Naive thymus-derived CD8-positive, alpha-beta T cell (primary cell): ENCODE measurements at regions of chr2 and their contacts with region 1.

Region 1: GRCh38 chr2:106160786-106161261 is 33.3 kb downstream of the UXS1 start:
- DNase-seq: peak in 9 of 10 donors; percentile 18 to 76 (median 60)
- ATAC-seq: peak; percentile 66 to 72
- H3K4me3 Mint-ChIP-seq: peak overlapping the region; percentile 89 to 99 (median 96)
- H3K27ac Mint-ChIP-seq: peak overlapping the region; percentile 93 to 100 (median 98)
- H3K4me1 Mint-ChIP-seq: peaks cover 46 to 97% (median 89%) of the 10 kb centered on the region in 4 donors
- H3K27me3 Mint-ChIP-seq: peaks cover 0 to 2% (median 0%) of the 10 kb centered on the region in 5 donors

Region 2: DNA sequence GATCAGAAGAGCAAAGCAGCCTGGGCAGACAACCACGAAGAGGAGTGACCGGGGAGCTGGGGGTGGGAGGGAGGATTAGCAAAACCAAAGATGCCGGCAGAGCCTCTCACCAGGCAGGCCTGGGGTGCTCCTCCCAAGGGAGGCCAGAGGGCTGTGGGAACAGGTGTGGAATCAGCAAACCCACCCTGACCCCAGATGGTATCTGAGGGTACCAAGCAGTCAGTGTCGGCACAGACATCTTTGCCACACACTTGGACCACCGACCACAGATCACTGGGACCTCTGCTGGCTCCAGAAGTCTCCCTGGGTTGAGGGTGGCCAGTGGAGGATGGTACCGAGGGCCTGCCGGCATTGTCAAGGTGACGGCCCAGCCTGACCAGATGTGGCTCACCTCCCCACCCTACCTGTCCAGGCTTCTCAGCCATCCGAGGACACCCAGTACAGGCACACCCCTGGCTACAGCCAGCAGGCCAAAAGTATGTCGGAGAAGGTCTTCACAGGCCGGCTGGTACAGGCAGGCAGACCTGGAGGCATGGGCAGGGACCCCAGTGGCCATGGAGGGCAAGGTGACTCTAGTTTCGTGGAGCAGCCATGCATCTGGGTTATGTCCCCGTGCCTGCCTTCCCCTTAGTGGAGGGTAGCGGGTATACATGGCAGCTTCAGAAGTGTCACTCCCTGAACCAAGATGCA is 48.8 kb before region 1 on chr2:
- POLR2A ChIA-PET with region 1: no interaction called
- DNase-seq: no peak
- ATAC-seq: no peak
- H3K4me3 Mint-ChIP-seq: no peak overlapping the region
- H3K27ac Mint-ChIP-seq: peak overlapping the region in 5 of 10 donors; percentile 6 to 77 (median 38)
- H3K4me1 Mint-ChIP-seq: peaks cover 3 to 25% (median 14%) of the 10 kb centered on the region in 4 donors
- H3K27me3 Mint-ChIP-seq: no peaks in the 10 kb centered on the region

Region 3: DNA sequence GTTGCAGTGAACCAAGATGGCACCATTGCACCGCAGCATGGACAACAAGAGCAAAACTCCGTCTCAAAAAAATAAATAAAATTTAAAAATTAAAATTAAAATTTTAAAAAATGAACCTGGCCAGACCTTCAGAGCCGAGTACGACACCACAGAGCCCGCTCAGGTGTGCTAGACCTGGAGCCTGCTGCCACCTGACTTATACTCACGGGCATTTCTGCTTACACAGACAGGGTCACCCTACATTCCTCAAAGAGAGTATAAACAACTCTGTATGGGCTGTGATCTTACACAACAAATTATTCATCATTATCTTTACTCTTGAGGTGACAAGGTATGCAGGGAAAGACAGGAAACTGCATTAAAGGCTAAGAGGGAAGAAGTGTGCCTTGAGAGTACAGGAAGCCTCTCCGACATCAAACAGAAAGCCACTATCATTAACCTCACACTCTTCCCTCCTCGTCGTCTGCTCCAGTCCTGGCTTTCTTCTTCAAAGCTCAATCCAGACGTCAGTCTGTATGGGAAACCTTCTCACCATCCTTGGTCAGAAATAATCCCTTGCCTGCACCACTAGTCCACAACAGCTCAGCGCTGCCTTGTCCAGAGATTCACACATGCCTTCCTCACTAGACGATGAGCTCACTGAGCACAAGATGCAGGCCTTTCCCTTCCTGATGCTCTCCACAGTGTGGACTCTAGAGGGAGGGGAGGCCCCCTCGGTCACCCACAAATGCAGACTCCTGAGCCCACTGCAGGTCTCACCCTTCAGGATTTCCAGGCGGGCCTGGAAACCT is 22.9 kb before region 1 on chr2:
- POLR2A ChIA-PET with region 1: interaction called, 22 read pairs
- DNase-seq: peak in 5 of 10 donors; percentile 11 to 48 (median 27)
- ATAC-seq: peak; percentile 77 to 83
- H3K4me3 Mint-ChIP-seq: peak overlapping the region; percentile 69 to 98 (median 82)
- H3K27ac Mint-ChIP-seq: peak overlapping the region; percentile 79 to 97 (median 92)
- H3K4me1 Mint-ChIP-seq: peaks cover 33 to 47% (median 47%) of the 10 kb centered on the region in 4 donors
- H3K27me3 Mint-ChIP-seq: no peaks in the 10 kb centered on the region

Region 4: GRCh38 chr2:106175086-106175850 is 14.4 kb after region 1 on chr2:
- POLR2A ChIA-PET with region 1: interaction called, 13 read pairs
- DNase-seq: no peak
- ATAC-seq: no peak
- H3K4me3 Mint-ChIP-seq: peak overlapping the region in 5 of 10 donors; percentile 42 to 65 (median 51)
- H3K27ac Mint-ChIP-seq: peak overlapping the region; percentile 49 to 89 (median 78)
- H3K4me1 Mint-ChIP-seq: peaks cover 51 to 91% (median 85%) of the 10 kb centered on the region in 4 donors
- H3K27me3 Mint-ChIP-seq: no peaks in the 10 kb centered on the region

Region 5: DNA sequence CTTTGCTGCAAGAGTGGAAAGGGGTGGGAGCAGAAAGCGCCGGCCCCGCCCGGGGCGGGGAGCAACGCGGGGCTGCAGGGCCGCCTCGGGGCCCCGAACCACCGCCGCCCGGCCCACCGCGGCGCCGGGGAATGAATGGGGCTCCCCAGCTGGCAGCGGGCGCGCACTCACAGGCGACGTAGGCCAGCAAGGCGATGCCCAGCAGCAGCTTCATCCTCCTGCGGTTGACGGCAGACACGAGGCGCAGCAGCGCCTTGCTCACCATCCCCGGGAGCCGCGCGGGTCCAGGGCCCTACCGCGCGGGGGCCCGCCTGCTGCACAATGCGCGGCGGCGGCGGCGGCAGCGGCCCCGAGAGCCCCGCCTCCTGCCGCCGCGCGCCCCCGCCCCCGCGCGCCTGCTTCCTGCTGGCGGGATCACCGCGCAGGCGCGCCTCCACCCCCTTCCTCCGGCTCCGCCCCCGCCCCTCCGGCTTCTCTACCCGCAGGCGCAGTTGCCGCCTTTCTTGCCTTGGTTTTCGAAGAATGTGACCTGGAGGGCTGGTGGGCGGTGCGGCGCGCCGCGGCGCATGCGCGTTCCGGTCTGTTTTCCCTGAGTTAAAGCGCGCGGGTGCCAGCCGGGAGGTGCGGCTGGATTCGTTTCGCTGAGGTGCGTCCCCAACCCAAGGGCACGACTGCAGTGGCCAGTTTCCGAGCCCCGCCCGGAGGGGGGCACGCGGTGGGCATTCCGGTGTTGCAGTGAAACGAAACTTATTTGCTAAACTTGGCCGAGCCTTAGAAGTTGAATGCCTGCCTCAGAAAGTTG is 33.4 kb after region 1 on chr2 and contains the start of gene UXS1:
- POLR2A ChIA-PET with region 1: interaction called, 71 read pairs
- DNase-seq: peak; percentile 94 to 99 (median 98)
- ATAC-seq: peak; percentile 79
- H3K4me3 Mint-ChIP-seq: peak within 1 kb of the TSS; percentile 85 to 97 (median 96)
- H3K27ac Mint-ChIP-seq: peak within 1 kb of the TSS; percentile 92 to 97 (median 96)
- H3K4me1 Mint-ChIP-seq: peaks cover 32 to 53% (median 46%) of the 10 kb centered on the region in 4 donors
- H3K27me3 Mint-ChIP-seq: no peaks in the 10 kb centered on the region
- polyA plus RNA-seq, gene UXS1: 56.4 to 108 (median 74.9) TPM